GM23248 (cell line): ENCODE measurements at regions of chr16 and their contacts with region 1.

Region 1: DNA sequence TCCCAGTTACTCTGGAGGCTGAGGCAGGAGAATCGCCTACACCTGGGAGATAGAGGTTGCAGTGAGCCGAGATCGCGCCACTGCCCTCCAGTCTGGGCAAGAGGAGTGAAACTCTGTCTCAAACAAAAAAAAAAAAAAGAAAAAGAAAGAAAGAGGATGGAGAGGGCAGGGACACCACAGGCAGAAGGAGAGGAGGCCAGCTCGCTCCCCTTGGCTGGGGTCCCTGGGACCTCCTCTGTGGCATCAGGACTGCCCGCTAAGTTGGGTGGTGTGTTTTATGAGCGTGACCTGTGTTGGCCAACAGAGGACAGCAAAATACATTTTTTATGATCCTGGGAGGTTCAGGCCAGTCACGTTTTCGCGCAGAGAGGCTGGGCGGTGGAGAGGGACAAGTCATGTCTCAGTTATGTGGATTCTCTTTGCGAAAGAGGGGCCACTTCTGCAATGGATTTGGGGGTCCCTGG is 229.6 kb downstream of the MRTFB start:
- DNase-seq: peak; percentile 96
- H3K4me3 ChIP-seq: peak overlapping the region; percentile 71
- H3K27ac ChIP-seq: peak overlapping the region; percentile 84
- H3K4me1 ChIP-seq: peaks cover 10% of the 10 kb centered on the region
- H3K27me3 ChIP-seq: no peaks in the 10 kb centered on the region

Region 2: DNA sequence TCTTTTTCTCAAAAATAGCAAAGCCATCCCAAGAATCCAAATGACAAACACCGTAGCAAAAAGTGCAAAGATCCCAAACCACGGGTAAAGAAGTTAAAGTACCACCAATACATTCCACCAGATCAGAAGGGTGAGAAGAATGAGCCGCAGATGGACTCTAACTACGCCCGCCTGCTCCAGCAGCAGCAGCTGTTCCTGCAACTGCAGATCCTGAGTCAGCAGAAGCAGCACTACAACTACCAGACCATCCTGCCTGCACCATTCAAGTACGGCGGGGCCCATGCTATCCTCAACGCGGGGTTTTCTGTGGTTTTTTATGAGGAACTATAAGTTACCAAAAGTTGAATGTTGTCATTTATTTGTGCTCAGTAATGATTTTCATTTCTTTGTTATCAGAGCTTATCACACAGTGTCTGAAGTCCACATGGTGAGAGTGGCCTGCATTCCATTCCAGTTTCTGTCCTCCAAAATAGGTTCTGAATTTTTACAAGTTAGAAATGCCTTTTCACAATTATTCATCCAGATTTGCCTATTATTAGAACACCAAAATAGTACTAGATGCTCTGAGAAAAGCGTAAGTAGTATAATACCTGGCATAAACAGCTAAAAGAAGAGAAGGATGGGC is 60.4 kb before region 1 on chr16:
- in situ Hi-C with region 1: no loop called
- DNase-seq: peak; percentile 5
- H3K4me3 ChIP-seq: no peak overlapping the region
- H3K27ac ChIP-seq: no peak overlapping the region
- H3K4me1 ChIP-seq: no peaks in the 10 kb centered on the region
- H3K27me3 ChIP-seq: no peaks in the 10 kb centered on the region

Region 3: GRCh38 chr16:14529010-14529669 is 228.4 kb after region 1 on chr16:
- in situ Hi-C with region 1: loop called (anchors 5 kb)
- DNase-seq: peak; percentile 92
- H3K4me3 ChIP-seq: peak overlapping the region; percentile 67
- H3K27ac ChIP-seq: peak overlapping the region; percentile 77
- H3K4me1 ChIP-seq: peaks cover 25% of the 10 kb centered on the region
- H3K27me3 ChIP-seq: no peaks in the 10 kb centered on the region

Region 4: DNA sequence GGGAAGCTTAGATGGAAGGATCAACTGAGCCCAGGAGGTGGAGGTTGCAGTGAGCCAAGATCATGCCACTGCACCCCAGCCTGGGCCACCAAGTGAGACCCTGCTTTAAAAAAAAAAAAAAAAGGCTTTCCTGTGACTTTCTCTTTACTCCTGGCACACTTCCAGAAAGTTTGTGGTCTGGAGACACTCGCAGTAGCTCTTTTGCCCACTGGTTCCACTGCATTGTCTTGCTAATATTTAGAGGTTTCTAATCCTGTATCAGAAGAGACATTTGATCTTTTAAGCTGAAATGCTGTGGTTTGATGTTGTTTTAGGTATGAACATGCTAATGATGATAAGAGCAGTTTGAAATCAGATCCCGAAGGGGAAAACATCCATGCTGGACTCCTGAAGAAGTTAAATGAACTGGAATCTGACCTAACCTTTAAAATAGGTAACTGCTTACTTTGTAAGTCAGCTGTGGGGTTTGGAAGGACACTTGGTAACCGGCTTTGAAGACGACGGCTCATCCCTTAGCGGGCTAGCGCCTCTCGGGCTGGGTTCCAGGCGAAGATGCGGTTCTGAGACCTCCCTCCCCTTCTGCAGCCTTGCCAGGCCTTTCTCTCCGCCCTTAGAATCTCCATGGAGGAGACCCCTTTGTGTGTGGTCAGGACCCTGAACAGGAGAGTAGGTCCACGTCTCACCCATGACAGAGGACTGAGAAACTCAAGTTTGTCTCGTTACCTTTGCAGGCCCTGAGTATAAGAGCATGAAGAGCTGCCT is 732.0 kb after region 1 on chr16:
- in situ Hi-C with region 1: no loop called
- DNase-seq: peak; percentile 34
- H3K4me3 ChIP-seq: no peak overlapping the region
- H3K27ac ChIP-seq: no peak overlapping the region
- H3K4me1 ChIP-seq: peaks cover 25% of the 10 kb centered on the region
- H3K27me3 ChIP-seq: no peaks in the 10 kb centered on the region